Prostate gland (tissue), 2 donors: ENCODE measurements at regions of chr10 and their contacts with region 1.

Region 1: DNA sequence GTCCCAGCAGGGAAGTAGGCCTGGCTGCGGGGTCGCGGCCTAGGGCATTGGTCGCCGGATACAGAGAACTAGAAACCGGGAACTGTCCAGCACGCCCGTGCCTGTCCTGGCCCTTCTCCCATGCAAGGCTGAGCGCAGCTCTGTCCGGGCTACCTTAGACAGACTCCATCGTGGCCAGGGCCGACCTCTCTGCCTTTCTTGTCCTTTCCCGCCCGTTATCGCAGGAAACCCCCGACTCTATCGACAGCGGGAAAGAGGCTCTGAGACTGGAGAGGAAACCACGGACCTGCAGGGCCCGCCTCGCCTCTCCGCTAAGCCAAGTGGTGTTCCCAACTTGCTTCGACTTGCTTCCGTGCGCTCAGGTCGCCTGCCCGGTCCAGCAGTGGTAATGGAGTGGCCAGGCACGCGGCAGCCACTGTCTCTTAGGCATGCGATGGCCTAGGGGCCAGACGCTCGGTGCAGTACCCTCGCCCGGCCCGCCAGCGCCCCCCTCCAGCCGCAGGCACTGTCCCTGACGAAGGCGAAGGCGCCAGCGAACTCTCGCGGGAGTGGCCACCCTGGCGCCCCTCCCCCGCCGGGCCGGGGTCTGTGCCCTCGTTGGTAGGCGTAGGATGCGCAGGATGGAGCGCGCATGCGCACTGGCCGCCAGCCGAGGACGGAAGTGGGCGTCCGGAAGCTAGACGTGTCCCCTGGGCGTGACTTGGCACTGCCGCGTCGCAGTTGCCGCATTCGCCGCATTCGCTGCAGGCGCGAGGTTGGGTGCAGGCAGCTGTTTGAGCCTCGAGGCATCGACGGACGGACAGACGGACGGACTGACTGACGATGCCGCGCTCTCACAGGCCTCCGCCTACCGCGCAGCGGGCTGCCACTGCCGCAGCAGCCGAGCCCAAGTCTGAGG is 54.4 kb downstream of the MCMBP start:
- DNase-seq: peak; percentile 36
- H3K4me3 ChIP-seq: peak overlapping the region; percentile 22 to 26
- H3K27ac ChIP-seq: no peak overlapping the region
- H3K4me1 ChIP-seq: no peaks in the 10 kb centered on the region
- H3K27me3 ChIP-seq: no peaks in the 10 kb centered on the region
- CTCF ChIP-seq: no peak
- POLR2A ChIP-seq: no peak

Region 2: GRCh38 chr10:119761106-119761505 is 57.1 kb before region 1 on chr10:
- intact Hi-C with region 1: loop called (anchors 5 kb)
- DNase-seq: no peak
- H3K4me3 ChIP-seq: no peak overlapping the region
- H3K27ac ChIP-seq: peak overlapping the region in 1 of 2 donors; percentile 5
- H3K4me1 ChIP-seq: no peaks in the 10 kb centered on the region
- H3K27me3 ChIP-seq: no peaks in the 10 kb centered on the region
- CTCF ChIP-seq: no peak
- POLR2A ChIP-seq: no peak

Region 3: GRCh38 chr10:119973261-119973660 is 155.0 kb after region 1 on chr10:
- intact Hi-C with region 1: no loop called
- DNase-seq: no peak
- H3K4me3 ChIP-seq: no peak overlapping the region
- H3K27ac ChIP-seq: no peak overlapping the region
- H3K4me1 ChIP-seq: no peaks in the 10 kb centered on the region
- H3K27me3 ChIP-seq: no peaks in the 10 kb centered on the region
- CTCF ChIP-seq: no peak
- POLR2A ChIP-seq: no peak